ENCODE measurements at regions of chr1 and their contacts with region 1.

Region 1: DNA sequence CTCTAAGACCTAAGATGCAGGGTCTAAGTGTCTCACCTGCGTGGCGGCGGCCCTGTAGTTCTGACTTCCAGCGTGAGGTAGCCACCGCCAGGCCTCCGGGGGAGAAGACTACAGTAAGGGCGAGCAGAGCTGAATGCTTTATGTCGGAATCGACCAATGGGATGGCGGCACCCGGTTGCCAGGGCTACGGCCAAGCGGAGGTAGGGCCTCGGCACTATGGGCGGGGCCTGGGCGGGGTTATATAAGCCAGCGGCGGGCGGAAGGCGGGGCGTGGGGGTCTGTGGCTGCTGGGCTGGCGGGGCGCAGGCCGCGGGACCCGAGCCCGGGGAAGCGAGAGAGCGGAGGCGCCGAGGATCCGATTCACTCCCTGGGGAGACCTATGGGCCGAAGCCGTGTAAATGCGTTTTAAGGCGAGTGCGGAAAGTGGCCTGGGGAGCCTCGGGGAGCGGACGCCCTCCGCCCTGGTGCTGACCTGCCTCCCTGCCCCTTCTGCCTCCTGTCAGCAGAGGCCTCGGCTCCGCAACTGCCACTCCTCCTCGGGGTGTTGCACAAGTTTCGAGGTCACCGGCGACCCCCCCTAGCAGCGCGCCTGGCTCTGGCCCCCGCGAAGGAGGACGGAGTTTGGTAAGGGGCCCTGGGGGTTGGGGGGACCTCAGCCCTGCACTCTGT is at the start of gene AZIN2:
- DNase-seq: peak; percentile 93 to 98 (median 97)
- ATAC-seq: peak; percentile 99
- H3K4me3 ChIP-seq: peak within 1 kb of the TSS; percentile 50 to 53
- H3K27ac ChIP-seq: no peak within 1 kb of the TSS
- H3K4me1 ChIP-seq: peaks cover 0 to 17% of the 10 kb centered on the region in 2 donors
- H3K27me3 ChIP-seq: peaks cover 0 to 26% of the 10 kb centered on the region in 2 donors
- CTCF ChIP-seq: no peak
- polyA plus RNA-seq, gene AZIN2: 8.0 to 13.1 (median 9.1) TPM

Region 2: GRCh38 chr1:32876341-32877210 is 204.4 kb before region 1 on chr1:
- intact Hi-C with region 1: loop called in 1 of 2 experiments (anchors 10 kb)
- DNase-seq: peak in 2 of 4 donors; percentile 58 to 93
- ATAC-seq: peak; percentile 90
- H3K4me3 ChIP-seq: no peak overlapping the region
- H3K27ac ChIP-seq: no peak overlapping the region
- H3K4me1 ChIP-seq: peaks cover 0 to 2% of the 10 kb centered on the region in 2 donors
- H3K27me3 ChIP-seq: peaks cover 0 to 62% of the 10 kb centered on the region in 2 donors
- CTCF ChIP-seq: peak; percentile 88 to 93

Region 3: GRCh38 chr1:32939655-32940371 is 141.2 kb before region 1 on chr1:
- intact Hi-C with region 1: loop called in 1 of 2 experiments (anchors 10 kb)
- DNase-seq: peak in 1 of 4 donors; percentile 65
- ATAC-seq: peak; percentile 75
- H3K4me3 ChIP-seq: no peak overlapping the region
- H3K27ac ChIP-seq: peak overlapping the region; percentile 54 to 66
- H3K4me1 ChIP-seq: peaks cover 14 to 54% of the 10 kb centered on the region in 2 donors
- H3K27me3 ChIP-seq: no peaks in the 10 kb centered on the region
- CTCF ChIP-seq: no peak